ENCODE measurements at regions of chr6 and their contacts with region 1.

Region 1: GRCh38 chr6:42547407-42548329 is 16.2 kb upstream of the UBR2 start:
- DNase-seq: peak; percentile 90
- ATAC-seq: peak; percentile 99
- H3K4me3 Mint-ChIP-seq: peak overlapping the region; percentile 64
- H3K27ac Mint-ChIP-seq: no peak overlapping the region
- H3K4me1 Mint-ChIP-seq: peaks cover 13% of the 10 kb centered on the region
- H3K27me3 Mint-ChIP-seq: peaks cover 10% of the 10 kb centered on the region
- CTCF ChIP-seq: peak; percentile 97

Region 2: GRCh38 chr6:42217519-42218367 is 329.9 kb before region 1 on chr6 and contains the start of gene MRPS10:
- CTCF ChIA-PET with region 1: interaction called, 53 read pairs
- POLR2A ChIA-PET with region 1: interaction called, 4 read pairs
- intact Hi-C with region 1: no loop called
- DNase-seq: peak; percentile 95
- ATAC-seq: peak; percentile 100
- H3K4me3 Mint-ChIP-seq: peak within 1 kb of the TSS; percentile 100
- H3K27ac Mint-ChIP-seq: peak within 1 kb of the TSS; percentile 97
- H3K4me1 Mint-ChIP-seq: peaks cover 31% of the 10 kb centered on the region
- H3K27me3 Mint-ChIP-seq: no peaks in the 10 kb centered on the region
- CTCF ChIP-seq: no peak
- total RNA-seq, gene MRPS10: 36.7 to 38.9 TPM

Region 3: DNA sequence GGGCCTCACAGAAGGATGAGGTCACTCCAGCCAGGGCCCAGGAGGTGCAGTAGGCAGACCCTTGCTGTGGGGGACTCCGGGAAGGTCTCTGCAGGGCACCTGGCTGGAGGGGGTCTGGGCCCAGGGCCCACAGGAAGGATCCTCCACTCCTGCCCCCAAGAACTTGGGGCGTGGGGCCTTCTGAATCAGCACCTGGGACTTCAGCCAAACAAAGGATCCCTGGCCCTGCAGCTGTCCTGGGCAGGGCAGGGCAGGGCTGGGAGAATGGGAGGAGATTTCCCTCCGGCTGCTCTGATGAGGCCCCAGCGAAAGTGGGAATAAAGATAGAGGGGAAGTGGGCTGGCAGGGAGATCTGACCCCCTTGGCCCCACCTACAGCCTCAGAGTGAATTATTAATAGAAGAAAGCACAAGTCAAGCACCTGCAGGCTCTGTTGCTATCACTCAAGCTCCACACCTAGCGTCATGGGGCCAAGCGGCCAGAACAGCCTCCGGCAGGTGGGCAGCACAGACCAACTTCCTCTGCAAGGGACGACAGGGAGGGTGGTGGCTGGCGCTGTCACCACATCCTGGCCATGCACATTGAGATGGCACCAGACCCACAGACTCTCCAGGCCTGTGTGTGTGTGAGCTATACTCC is 268.4 kb before region 1 on chr6:
- CTCF ChIA-PET with region 1: interaction called, 32 read pairs
- POLR2A ChIA-PET with region 1: interaction called, 3 read pairs
- intact Hi-C with region 1: no loop called
- DNase-seq: peak; percentile 67
- ATAC-seq: peak; percentile 58
- H3K4me3 Mint-ChIP-seq: no peak overlapping the region
- H3K27ac Mint-ChIP-seq: peak overlapping the region; percentile 86
- H3K4me1 Mint-ChIP-seq: peaks cover 48% of the 10 kb centered on the region
- H3K27me3 Mint-ChIP-seq: no peaks in the 10 kb centered on the region
- CTCF ChIP-seq: no peak

Region 4: DNA sequence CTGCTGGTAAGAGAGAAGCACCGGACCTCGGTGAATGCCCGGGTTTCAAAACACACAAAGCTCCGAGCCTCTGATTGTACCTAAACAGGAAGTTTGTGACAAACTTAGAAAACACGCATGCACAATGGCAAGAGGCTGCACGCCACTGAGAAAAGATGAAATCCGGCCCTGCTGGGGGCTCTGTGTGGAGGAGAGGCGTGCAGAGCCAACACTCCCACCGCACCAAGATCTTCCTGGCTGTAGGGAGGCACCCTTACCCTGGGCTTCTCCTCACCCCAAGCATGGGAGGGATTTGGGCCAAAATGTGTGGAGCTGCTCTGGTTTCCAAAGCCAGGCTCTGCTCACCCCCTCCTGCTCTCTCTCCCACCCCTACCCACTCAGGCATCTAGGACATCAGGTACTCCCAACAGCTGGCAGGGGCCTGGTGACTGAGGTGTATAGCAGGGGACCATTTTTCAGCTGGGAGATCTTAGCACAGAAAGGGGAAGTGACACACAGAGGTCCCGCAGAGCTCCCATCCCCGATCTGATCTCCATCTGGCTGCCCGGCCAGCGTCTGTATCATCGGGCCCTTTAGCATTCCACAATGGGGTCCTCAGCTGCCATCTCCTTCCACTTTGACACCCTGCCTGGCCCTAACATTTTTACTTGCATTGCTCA is 180.2 kb before region 1 on chr6:
- CTCF ChIA-PET with region 1: interaction called, 24 read pairs
- POLR2A ChIA-PET with region 1: no interaction called
- intact Hi-C with region 1: no loop called
- DNase-seq: peak; percentile 40
- ATAC-seq: peak; percentile 50
- H3K4me3 Mint-ChIP-seq: peak overlapping the region; percentile 69
- H3K27ac Mint-ChIP-seq: peak overlapping the region; percentile 93
- H3K4me1 Mint-ChIP-seq: peaks cover 59% of the 10 kb centered on the region
- H3K27me3 Mint-ChIP-seq: no peaks in the 10 kb centered on the region
- CTCF ChIP-seq: no peak

Region 5: DNA sequence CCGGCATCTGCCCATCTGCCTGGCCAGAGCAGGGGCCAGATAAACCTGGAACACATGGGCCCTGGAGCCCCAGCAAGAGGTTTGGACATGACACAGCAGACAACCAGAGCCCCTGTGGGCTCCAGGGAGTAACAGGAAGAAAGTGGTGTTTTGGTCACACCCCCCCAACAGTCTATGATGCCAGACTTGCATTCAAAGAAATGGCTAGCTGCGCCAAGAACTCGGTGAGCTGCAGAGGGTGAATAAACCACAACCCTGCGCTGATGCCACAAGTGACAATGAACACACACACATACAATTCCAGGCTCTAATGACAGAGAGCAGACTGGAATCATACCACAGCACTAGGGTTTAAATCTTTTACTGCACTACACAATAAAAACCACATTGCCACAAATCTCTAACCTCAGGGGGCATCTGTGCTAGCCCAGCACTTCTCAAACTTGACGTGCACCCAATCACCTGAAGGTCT is 130.0 kb before region 1 on chr6:
- CTCF ChIA-PET with region 1: interaction called, 15 read pairs
- POLR2A ChIA-PET with region 1: no interaction called
- intact Hi-C with region 1: no loop called
- DNase-seq: peak; percentile 86
- ATAC-seq: peak; percentile 90
- H3K4me3 Mint-ChIP-seq: peak overlapping the region; percentile 35
- H3K27ac Mint-ChIP-seq: peak overlapping the region; percentile 67
- H3K4me1 Mint-ChIP-seq: peaks cover 61% of the 10 kb centered on the region
- H3K27me3 Mint-ChIP-seq: no peaks in the 10 kb centered on the region
- CTCF ChIP-seq: no peak

Region 6: GRCh38 chr6:42460883-42461282 is 86.8 kb before region 1 on chr6:
- CTCF ChIA-PET with region 1: interaction called, 13 read pairs
- POLR2A ChIA-PET with region 1: no interaction called
- intact Hi-C with region 1: no loop called
- DNase-seq: no peak
- ATAC-seq: no peak
- H3K4me3 Mint-ChIP-seq: no peak overlapping the region
- H3K27ac Mint-ChIP-seq: no peak overlapping the region
- H3K4me1 Mint-ChIP-seq: no peaks in the 10 kb centered on the region
- H3K27me3 Mint-ChIP-seq: no peaks in the 10 kb centered on the region
- CTCF ChIP-seq: no peak

Region 7: DNA sequence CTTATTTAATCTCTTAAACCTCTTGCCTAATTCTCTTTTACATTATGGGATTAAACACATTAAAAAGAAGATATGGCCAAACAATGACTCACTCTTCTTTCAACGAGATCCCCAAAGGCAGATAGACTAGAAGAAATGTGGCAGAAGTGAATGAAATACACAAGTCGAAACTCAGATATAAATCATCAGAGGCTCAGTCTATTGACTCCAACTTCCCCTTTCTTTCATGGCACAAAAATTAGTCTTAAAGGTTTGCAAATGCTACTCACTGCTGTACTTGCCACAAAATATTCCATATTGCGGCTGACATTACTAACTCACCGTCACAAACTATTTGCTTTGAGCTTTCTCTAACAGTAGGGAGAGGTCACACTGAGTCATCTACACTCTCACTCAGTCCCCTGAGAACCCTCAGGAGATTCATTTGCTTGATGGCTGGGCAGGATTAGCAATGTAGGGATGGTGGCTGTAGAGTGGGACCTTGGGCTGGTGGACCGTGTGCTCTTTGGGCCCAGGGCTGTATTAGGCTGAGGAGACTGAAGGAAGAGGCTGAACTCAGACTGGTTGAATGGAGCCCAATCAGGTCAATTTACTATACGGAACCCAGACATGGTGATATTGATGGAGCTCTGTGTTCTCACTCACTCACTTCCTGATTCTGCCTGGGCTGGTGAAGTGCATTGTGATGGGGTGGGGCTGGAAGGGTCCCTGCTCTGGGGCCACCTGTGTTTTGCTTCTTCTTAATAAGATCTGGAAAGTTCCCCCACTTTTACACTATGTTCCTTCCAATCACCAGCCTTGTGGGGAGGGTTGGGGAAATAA is 26.7 kb before region 1 on chr6:
- CTCF ChIA-PET with region 1: interaction called, 37 read pairs
- POLR2A ChIA-PET with region 1: no interaction called
- intact Hi-C with region 1: no loop called
- DNase-seq: peak; percentile 27
- ATAC-seq: peak; percentile 94
- H3K4me3 Mint-ChIP-seq: no peak overlapping the region
- H3K27ac Mint-ChIP-seq: peak overlapping the region; percentile 80
- H3K4me1 Mint-ChIP-seq: peaks cover 19% of the 10 kb centered on the region
- H3K27me3 Mint-ChIP-seq: no peaks in the 10 kb centered on the region
- CTCF ChIP-seq: no peak